PC-3 (cell line): ENCODE measurements at regions of chr3 and their contacts with region 1.

Region 1: GRCh38 chr3:183122257-183122932 is 23.1 kb upstream of the MCCC1 start:
- DNase-seq: peak; percentile 86
- ATAC-seq: peak; percentile 81
- H3K4me3 ChIP-seq: no peak overlapping the region
- H3K27ac ChIP-seq: peak overlapping the region; percentile 62
- H3K4me1 ChIP-seq: peaks cover 28% of the 10 kb centered on the region
- H3K27me3 ChIP-seq: no peaks in the 10 kb centered on the region
- CTCF ChIP-seq: peak; percentile 97

Region 2: GRCh38 chr3:181823716-181824115 is 1298.7 kb before region 1 on chr3:
- CTCF ChIA-PET with region 1: no interaction called
- POLR2A ChIA-PET with region 1: no interaction called
- intact Hi-C with region 1: no loop called
- DNase-seq: no peak
- ATAC-seq: no peak
- H3K4me3 ChIP-seq: no peak overlapping the region
- H3K27ac ChIP-seq: no peak overlapping the region
- H3K4me1 ChIP-seq: no peaks in the 10 kb centered on the region
- H3K27me3 ChIP-seq: peaks cover 37% of the 10 kb centered on the region
- CTCF ChIP-seq: no peak

Region 3: GRCh38 chr3:182909318-182910040 is 212.9 kb before region 1 on chr3:
- CTCF ChIA-PET with region 1: no interaction called
- POLR2A ChIA-PET with region 1: no interaction called
- intact Hi-C with region 1: loop called (anchors 1 kb)
- DNase-seq: peak; percentile 38
- ATAC-seq: peak; percentile 51
- H3K4me3 ChIP-seq: no peak overlapping the region
- H3K27ac ChIP-seq: no peak overlapping the region
- H3K4me1 ChIP-seq: 0 out of 2 replicates have a peak, but pooled peaks cover 3% of the 10 kb centered on the region
- H3K27me3 ChIP-seq: no peaks in the 10 kb centered on the region
- CTCF ChIP-seq: peak; percentile 77

Region 4: GRCh38 chr3:183099026-183099837 is 23.2 kb before region 1 on chr3 and contains the start of gene MCCC1:
- CTCF ChIA-PET with region 1: no interaction called
- POLR2A ChIA-PET with region 1: no interaction called
- intact Hi-C with region 1: loop called (anchors 2 kb)
- DNase-seq: peak; percentile 97
- ATAC-seq: peak; percentile 91
- H3K4me3 ChIP-seq: peak within 1 kb of the TSS; percentile 82
- H3K27ac ChIP-seq: peak within 1 kb of the TSS; percentile 79
- H3K4me1 ChIP-seq: peaks cover 30% of the 10 kb centered on the region
- H3K27me3 ChIP-seq: no peaks in the 10 kb centered on the region
- CTCF ChIP-seq: no peak
- total RNA-seq, gene MCCC1: 18.5 and 26.3 TPM in 2 replicates

Region 5: DNA sequence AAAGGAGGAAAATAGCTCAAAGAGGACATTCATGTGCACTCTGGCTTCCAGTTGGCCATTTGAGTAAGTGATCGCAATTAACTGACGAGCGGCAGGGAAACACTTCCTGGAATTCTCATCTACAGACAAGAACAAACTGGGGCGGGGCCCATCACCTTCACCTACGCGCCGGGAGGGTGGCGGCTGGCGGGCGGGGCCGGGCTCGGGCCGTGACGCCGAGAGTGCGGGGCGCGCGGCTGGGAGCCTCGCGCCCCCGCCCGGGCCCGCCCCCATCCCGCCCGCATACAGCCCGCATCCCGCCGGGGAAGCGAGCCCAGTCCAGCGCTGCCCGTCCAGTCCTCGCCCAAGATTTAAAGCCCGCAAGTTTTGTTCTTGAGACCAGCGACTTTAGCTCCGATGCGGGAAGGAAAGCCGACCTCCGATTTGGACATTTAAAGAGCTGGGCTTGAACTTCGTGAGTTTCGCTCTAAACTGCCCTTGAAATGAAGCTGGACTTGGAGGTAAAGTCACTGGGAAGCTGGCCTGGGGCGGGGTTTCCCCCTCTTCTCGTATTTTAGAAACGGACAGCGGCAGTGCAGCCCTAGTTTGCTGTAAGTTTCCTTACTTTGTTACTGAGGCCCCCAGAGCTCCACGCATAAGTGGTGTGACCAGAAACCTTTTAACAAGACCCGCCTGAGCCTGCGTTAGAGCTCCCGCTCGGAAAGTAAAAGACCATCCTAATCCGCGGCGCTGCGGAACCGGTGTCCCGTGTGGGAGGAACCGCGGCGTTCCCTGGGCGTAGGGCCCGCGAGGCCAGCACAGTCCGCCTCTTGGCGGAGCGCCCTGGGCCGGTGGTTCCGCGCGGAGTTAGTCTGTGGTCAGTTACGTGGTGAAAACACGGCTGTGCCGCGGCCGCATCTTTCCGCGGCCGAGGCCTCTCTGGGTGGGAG is 130.8 kb after region 1 on chr3 and contains the start of gene B3GNT5:
- CTCF ChIA-PET with region 1: no interaction called
- POLR2A ChIA-PET with region 1: interaction called, 5 read pairs
- intact Hi-C with region 1: loop called (anchors 2 kb)
- DNase-seq: peak; percentile 75
- ATAC-seq: peak; percentile 53
- H3K4me3 ChIP-seq: peak within 1 kb of the TSS; percentile 89
- H3K27ac ChIP-seq: peak within 1 kb of the TSS; percentile 88
- H3K4me1 ChIP-seq: peaks cover 34% of the 10 kb centered on the region
- H3K27me3 ChIP-seq: no peaks in the 10 kb centered on the region
- CTCF ChIP-seq: no peak
- total RNA-seq, gene B3GNT5: 22.9 and 29.2 TPM in 2 replicates

Region 6: DNA sequence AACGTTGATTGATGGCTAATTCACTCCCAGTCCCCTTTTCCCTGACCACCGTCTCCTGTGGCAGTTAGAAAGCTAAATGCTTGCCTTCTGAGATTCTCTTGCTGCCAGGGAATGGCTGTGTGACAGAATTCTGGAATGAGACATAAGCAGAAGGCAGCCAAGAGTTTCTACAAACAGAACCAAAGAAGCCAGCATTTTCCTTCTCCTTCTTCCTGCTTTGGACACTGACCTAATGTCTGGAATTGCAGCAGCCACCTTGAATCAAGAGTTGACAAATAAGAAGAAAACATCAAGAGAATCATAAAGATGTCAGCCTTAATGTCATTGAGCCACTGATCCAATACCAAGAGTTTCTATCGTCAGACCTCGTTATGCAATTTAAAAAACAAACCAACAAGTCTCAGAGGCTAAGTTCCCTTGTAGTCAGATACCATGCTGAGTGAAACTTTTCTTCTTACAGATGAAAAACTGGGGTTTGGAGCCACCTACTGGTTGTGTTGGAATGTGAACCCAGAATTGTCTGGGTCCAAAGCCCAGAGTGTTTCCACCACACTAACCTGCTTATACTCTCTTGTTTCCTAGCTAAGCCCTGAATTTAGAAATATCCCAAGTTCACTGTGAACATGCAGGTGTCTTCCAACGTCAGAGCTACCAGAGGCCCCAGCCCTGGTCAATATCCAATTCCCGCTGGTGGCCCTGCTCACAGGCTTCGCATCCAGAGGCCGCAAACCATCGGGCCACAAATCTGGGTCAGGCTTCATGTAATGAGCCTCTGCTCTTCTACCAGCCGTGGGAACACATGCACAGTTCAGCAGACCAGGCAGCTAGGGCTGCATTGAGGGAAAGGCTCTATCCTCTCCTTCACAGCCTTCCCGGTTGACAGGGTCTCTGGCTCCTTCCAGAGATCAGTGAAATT is 263.6 kb after region 1 on chr3:
- CTCF ChIA-PET with region 1: interaction called, 5 read pairs
- POLR2A ChIA-PET with region 1: no interaction called
- intact Hi-C with region 1: loop called (anchors 1 kb)
- DNase-seq: peak; percentile 86
- ATAC-seq: peak; percentile 73
- H3K4me3 ChIP-seq: no peak overlapping the region
- H3K27ac ChIP-seq: no peak overlapping the region
- H3K4me1 ChIP-seq: peaks cover 24% of the 10 kb centered on the region
- H3K27me3 ChIP-seq: no peaks in the 10 kb centered on the region
- CTCF ChIP-seq: peak; percentile 91